ENCODE measurements at regions of chr1 and their contacts with region 1.

Region 1: GRCh38 chr1:100989306-100990077 is 36.1 kb downstream of the DPH5 start:
- DNase-seq: no peak
- H3K4me3 Mint-ChIP-seq: no peak overlapping the region
- H3K27ac Mint-ChIP-seq: no peak overlapping the region
- H3K4me1 Mint-ChIP-seq: peaks cover 10% of the 10 kb centered on the region
- H3K27me3 Mint-ChIP-seq: no peaks in the 10 kb centered on the region

Region 2: DNA sequence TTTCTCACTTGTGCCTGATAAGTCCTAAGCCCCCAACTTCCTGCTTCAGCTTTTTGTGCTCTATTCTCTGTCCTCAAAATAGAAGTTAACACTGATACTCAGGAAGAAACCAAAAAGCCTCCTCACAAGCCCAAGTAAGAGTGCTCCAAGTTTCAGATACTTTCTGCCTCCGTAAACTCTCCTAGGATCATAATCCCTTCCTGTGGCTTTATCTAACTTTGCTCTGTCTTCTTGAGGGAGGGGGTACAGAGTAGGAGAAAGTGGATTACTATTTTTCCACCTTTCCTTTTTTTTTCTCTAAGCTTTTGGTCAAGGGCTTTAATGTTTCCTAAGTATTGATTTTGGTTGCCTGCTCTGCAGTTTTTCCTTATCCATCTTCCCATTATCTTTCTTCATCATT is 18.5 kb before region 1 on chr1:
- CTCF ChIA-PET with region 1: interaction called, 3 read pairs
- intact Hi-C with region 1: loop called (anchors 2 kb)
- DNase-seq: no peak
- H3K4me3 Mint-ChIP-seq: no peak overlapping the region
- H3K27ac Mint-ChIP-seq: no peak overlapping the region
- H3K4me1 Mint-ChIP-seq: peaks cover 31% of the 10 kb centered on the region
- H3K27me3 Mint-ChIP-seq: no peaks in the 10 kb centered on the region